ENCODE measurements at regions of chr12 and their contacts with region 1.

Region 1: GRCh38 chr12:57069523-57069922 is 9.1 kb downstream of the NEMP1 start:
- DNase-seq: peak; percentile 55 to 91
- H3K4me3 ChIP-seq: no peak overlapping the region
- H3K27ac ChIP-seq: peak overlapping the region; percentile 81 to 85
- H3K4me1 ChIP-seq: peaks cover 0 to 13% of the 10 kb centered on the region in 2 donors
- H3K27me3 ChIP-seq: no peaks in the 10 kb centered on the region
- CTCF ChIP-seq: peak; percentile 84 to 93 (median 86)

Region 2: GRCh38 chr12:57111031-57111734 is 41.7 kb after region 1 on chr12 and contains the start of gene STAT6:
- intact Hi-C with region 1: loop called (anchors 1 kb)
- DNase-seq: peak; percentile 80 to 92
- H3K4me3 ChIP-seq: peak within 1 kb of the TSS; percentile 76 to 90
- H3K27ac ChIP-seq: peak within 1 kb of the TSS; percentile 96 to 98
- H3K4me1 ChIP-seq: peaks cover 4 to 17% of the 10 kb centered on the region in 2 donors
- H3K27me3 ChIP-seq: no peaks in the 10 kb centered on the region
- CTCF ChIP-seq: no peak
- total RNA-seq, gene STAT6: 188 TPM

Region 3: GRCh38 chr12:57175428-57176138 is 106.1 kb after region 1 on chr12:
- intact Hi-C with region 1: loop called (anchors 2 kb)
- DNase-seq: peak; percentile 34 to 92
- H3K4me3 ChIP-seq: no peak overlapping the region
- H3K27ac ChIP-seq: peak overlapping the region; percentile 53 to 57
- H3K4me1 ChIP-seq: no peaks in the 10 kb centered on the region
- H3K27me3 ChIP-seq: no peaks in the 10 kb centered on the region
- CTCF ChIP-seq: peak; percentile 79 to 91 (median 90)

Region 4: DNA sequence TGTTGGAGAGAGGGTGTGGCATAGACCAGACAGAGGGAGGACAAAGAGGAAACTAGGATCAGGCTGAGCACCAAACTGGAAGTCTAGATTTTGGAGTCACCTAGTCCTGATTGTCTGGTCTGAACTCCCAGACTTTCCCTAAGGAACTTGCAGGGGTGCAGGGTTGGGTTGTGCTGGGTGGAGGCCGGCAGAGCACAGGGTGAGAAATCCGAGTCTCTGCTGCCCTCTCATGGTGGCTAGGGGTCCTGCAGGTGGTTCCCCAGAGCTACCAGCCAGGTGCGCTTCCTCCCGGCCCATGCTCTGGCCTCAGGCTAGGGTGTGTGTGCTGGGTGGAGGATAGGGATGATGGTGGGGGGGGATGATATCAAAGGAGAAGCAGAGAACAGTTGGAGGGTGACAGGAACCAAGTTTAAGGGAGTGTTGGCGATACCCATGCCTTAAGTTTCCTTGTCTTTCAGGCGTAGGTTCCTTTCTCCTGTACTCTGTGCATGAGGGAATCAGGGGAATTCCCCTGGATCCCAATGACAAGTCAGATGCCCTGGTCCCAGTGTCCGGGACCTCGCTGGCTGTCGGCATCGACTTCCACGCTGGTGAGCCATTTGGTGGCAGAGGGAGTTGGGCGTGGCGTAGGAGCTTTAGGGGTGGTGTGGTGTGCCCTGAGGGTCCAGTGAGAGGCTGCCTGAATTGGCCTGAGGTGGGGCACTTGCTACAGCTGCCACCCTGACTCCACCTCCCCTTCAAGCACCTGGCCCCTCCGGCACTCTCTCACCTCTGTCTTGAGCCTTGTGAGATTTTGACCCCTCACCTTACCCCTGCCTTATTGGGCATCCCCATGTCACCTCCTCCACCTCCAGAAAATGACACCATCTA is 113.6 kb after region 1 on chr12:
- intact Hi-C with region 1: loop called (anchors 2 kb)
- DNase-seq: peak in 1 of 2 donors; percentile 82
- H3K4me3 ChIP-seq: no peak overlapping the region
- H3K27ac ChIP-seq: no peak overlapping the region
- H3K4me1 ChIP-seq: no peaks in the 10 kb centered on the region
- H3K27me3 ChIP-seq: no peaks in the 10 kb centered on the region
- CTCF ChIP-seq: peak; percentile 86 to 91 (median 88)

Region 5: GRCh38 chr12:57238854-57239554 is 169.5 kb after region 1 on chr12:
- intact Hi-C with region 1: loop called (anchors 1 kb)
- DNase-seq: peak in 1 of 2 donors; percentile 94
- H3K4me3 ChIP-seq: peak overlapping the region; percentile 45 to 62
- H3K27ac ChIP-seq: peak overlapping the region in 1 of 2 donors; percentile 50
- H3K4me1 ChIP-seq: peaks cover 31 to 52% of the 10 kb centered on the region in 2 donors
- H3K27me3 ChIP-seq: peaks cover 28% of the 10 kb centered on the region
- CTCF ChIP-seq: peak; percentile 100

Region 6: GRCh38 chr12:57822392-57823130 is 753.0 kb after region 1 on chr12:
- intact Hi-C with region 1: no loop called
- DNase-seq: no peak
- H3K4me3 ChIP-seq: no peak overlapping the region
- H3K27ac ChIP-seq: peak overlapping the region; percentile 15 to 38
- H3K4me1 ChIP-seq: peaks cover 0 to 4% of the 10 kb centered on the region in 2 donors
- H3K27me3 ChIP-seq: no peaks in the 10 kb centered on the region
- CTCF ChIP-seq: no peak